ENCODE measurements at regions of chr13 and their contacts with region 1.

Region 1: DNA sequence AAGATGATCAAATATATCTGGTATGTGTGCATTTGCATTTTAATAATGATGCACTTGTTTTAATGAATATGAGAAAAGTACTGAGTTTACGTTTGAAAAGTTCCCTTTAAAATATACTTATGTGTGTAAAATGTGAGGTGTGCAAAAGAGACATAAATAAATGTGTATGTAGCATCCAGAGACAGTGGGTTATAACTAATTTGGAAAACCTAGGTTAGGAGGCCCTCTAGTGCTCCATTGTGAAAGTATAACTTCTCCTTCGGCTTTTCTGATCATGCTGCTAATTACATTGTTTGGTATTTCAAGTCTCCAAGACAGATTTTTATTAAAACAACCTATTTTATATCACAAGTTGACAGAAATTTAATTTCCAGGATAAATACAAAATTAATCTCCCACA is 30.1 kb downstream of the SCEL start:
- DNase-seq: peak; percentile 55

Region 2: DNA sequence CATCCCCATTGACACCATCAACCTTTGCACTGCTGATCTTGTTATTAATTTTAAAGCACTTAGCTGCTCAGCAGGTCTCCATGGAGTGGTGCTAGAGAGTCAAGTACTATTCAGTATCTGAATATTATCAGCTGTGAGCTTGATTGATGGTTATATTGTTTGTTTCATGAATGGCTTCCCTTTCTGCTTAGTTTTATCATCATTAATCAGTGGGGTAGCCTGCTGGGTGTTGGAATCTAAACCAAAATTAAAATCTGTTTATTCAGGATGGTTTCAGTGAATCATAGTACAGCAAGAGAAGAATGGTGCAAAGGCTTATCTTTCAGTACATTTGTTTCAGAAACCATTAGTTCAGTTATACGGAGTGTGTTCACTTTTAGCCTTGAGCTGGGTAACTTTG is 72.7 kb before region 1 on chr13:
- CTCF ChIA-PET with region 1: interaction called, 11 read pairs
- POLR2A ChIA-PET with region 1: no interaction called
- DNase-seq: peak; percentile 55